Endothelial cell of umbilical vein (primary cell): ENCODE measurements at regions of chr17 and their contacts with region 1.

Region 1: GRCh38 chr17:40203131-40203530 is 16.0 kb upstream of the WIPF2 start:
- DNase-seq: peak; percentile 41
- H3K4me3 ChIP-seq: no peak overlapping the region
- H3K27ac ChIP-seq: no peak overlapping the region
- H3K4me1 ChIP-seq: peaks cover 10% of the 10 kb centered on the region
- H3K27me3 ChIP-seq: peaks cover 0 to 2% of the 10 kb centered on the region in 2 experiments
- CTCF ChIP-seq: no peak
- POLR2A ChIP-seq: no peak

Region 2: GRCh38 chr17:40174514-40174913 is 28.6 kb before region 1 on chr17:
- CTCF ChIA-PET with region 1: no interaction called
- POLR2A ChIA-PET with region 1: no interaction called
- dilution Hi-C with region 1: no loop called
- intact Hi-C with region 1: no loop called
- DNase-seq: no peak
- H3K4me3 ChIP-seq: no peak overlapping the region
- H3K27ac ChIP-seq: no peak overlapping the region
- H3K4me1 ChIP-seq: peaks cover 3% of the 10 kb centered on the region
- H3K27me3 ChIP-seq: no peaks in the 10 kb centered on the region
- CTCF ChIP-seq: no peak
- POLR2A ChIP-seq: no peak

Region 3: DNA sequence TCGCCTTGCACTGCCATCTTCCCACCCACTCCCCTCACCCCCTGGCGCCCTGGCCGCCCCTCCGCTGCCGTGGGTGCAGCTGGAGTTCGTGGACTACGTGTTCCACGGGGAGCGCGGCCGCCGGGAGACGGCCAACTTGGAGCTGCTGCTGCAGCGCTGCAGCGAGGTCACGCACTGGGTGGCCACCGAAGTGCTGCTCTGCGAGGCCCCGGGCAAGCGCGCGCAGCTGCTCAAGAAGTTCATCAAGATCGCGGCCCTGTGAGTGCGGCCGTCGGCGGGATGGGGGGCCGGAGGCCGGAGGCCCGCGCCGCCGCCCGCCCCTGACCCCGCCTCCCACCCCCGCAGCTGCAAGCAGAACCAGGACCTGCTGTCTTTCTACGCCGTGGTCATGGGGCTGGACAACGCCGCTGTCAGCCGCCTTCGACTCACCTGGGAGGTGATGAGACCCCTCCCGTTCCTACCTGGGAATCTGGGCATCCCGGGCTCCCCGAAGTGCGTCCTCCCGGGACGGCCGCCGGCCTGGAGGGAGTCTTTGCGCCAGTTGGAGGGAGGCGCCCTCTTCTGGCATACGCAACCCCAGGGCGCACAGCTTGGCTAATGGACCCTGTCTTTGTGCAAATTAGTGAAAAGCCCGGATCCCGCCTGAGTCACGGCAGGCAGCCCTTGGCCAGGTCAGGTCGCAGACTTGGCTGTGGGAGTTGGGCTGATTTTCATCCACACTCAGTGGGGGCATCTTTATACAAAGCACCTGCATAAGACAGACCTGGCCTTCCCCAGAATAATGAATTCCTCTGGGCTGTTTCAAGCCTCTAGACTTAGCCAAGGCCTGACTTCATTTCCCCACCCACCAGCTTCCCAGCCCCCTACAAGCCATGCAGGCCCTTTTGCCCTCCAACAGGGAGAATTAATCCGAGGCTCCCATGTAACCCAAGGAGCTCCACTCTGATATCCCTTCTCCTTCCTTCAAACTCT is 11.6 kb before region 1 on chr17:
- CTCF ChIA-PET with region 1: interaction called, 22 read pairs
- POLR2A ChIA-PET with region 1: no interaction called
- dilution Hi-C with region 1: no loop called
- intact Hi-C with region 1: no loop called
- DNase-seq: peak; percentile 88
- H3K4me3 ChIP-seq: peak overlapping the region; percentile 20 to 55 (median 40)
- H3K27ac ChIP-seq: no peak overlapping the region
- H3K4me1 ChIP-seq: peaks cover 4% of the 10 kb centered on the region
- H3K27me3 ChIP-seq: no peaks in the 10 kb centered on the region
- CTCF ChIP-seq: peak; percentile 73 to 90
- POLR2A ChIP-seq: no peak

Region 4: GRCh38 chr17:40287494-40288369 is 84.6 kb after region 1 on chr17 and contains the start of gene CDC6:
- CTCF ChIA-PET with region 1: interaction called, 128 read pairs
- POLR2A ChIA-PET with region 1: no interaction called
- dilution Hi-C with region 1: no loop called
- intact Hi-C with region 1: loop called (anchors 1 kb)
- DNase-seq: peak; percentile 99
- H3K4me3 ChIP-seq: peak within 1 kb of the TSS; percentile 43 to 72 (median 65)
- H3K27ac ChIP-seq: peak within 1 kb of the TSS; percentile 50
- H3K4me1 ChIP-seq: peaks cover 35% of the 10 kb centered on the region
- H3K27me3 ChIP-seq: no peaks in the 10 kb centered on the region
- CTCF ChIP-seq: no peak
- POLR2A ChIP-seq: peak; percentile 68
- total RNA-seq, gene CDC6: 49.9 and 55.2 TPM in 2 replicates